Heart right ventricle (tissue), 16 donors: ENCODE measurements at regions of chr9 and their contacts with region 1.

Region 1: GRCh38 chr9:69253057-69253456 is 72.0 kb upstream of the ENTREP1 start:
- DNase-seq: no peak
- ATAC-seq: peak in 6 of 8 donors; percentile 15 to 45 (median 36)
- H3K4me3 ChIP-seq: no peak overlapping the region
- H3K27ac ChIP-seq: peak overlapping the region in 8 of 10 donors; percentile 12 to 77 (median 58)
- H3K4me1 ChIP-seq: peaks cover 0 to 35% (median 23%) of the 10 kb centered on the region in 9 donors
- H3K27me3 ChIP-seq: no peaks in the 10 kb centered on the region
- CTCF ChIP-seq: no peak

Region 2: GRCh38 chr9:69035438-69036308 is 217.4 kb before region 1 on chr9 and contains the start of gene FXN:
- intact Hi-C with region 1: loop called in 1 of 10 experiments (anchors 5 kb)
- DNase-seq: peak; percentile 83 to 87
- ATAC-seq: peak; percentile 91 to 97 (median 95)
- H3K4me3 ChIP-seq: peak within 1 kb of the TSS; percentile 54 to 81 (median 72)
- H3K27ac ChIP-seq: peak within 1 kb of the TSS; percentile 34 to 89 (median 86)
- H3K4me1 ChIP-seq: peaks cover 0 to 22% (median 11%) of the 10 kb centered on the region in 9 donors
- H3K27me3 ChIP-seq: no peaks in the 10 kb centered on the region
- CTCF ChIP-seq: peak; percentile 98 to 100 (median 99)
- total RNA-seq, gene FXN: 18.8 to 41.8 (median 36.8) TPM

Region 3: GRCh38 chr9:69376651-69377050 is 123.6 kb after region 1 on chr9:
- intact Hi-C with region 1: loop called in 2 of 10 experiments (anchors 10 kb)
- DNase-seq: no peak
- ATAC-seq: peak; percentile 70 to 90 (median 83)
- H3K4me3 ChIP-seq: no peak overlapping the region
- H3K27ac ChIP-seq: peak overlapping the region in 9 of 10 donors; percentile 43 to 87 (median 57)
- H3K4me1 ChIP-seq: peaks cover 11 to 71% (median 46%) of the 10 kb centered on the region in 9 donors
- H3K27me3 ChIP-seq: no peaks in the 10 kb centered on the region
- CTCF ChIP-seq: no peak

Region 4: DNA sequence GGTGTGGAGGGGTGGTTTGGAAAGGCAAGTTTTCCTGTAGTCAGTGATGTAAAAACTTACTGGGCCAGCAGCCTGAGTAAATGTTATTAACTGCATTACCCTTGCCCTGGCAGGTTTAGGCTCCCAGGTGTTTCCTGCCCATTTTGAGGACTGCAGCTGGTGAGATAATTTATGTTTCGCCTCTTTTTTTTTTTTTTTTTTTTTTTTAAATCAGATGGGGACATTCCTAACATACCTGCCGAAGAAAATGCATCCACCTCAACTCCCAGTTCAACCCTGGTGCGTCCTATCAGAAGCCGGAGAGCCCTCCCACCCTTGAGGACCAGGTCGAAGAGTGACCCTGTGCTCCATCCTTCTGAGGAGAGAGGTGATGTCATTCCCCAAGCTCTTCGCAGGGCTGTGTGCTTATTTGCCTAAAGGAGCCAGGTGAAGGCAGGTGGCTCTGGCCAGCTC is 132.6 kb after region 1 on chr9:
- intact Hi-C with region 1: loop called in 1 of 10 experiments (anchors 10 kb)
- DNase-seq: no peak
- ATAC-seq: peak in 1 of 8 donors; percentile 27
- H3K4me3 ChIP-seq: no peak overlapping the region
- H3K27ac ChIP-seq: no peak overlapping the region
- H3K4me1 ChIP-seq: peaks cover 4 to 50% (median 12%) of the 10 kb centered on the region in 9 donors
- H3K27me3 ChIP-seq: no peaks in the 10 kb centered on the region
- CTCF ChIP-seq: no peak

Region 5: DNA sequence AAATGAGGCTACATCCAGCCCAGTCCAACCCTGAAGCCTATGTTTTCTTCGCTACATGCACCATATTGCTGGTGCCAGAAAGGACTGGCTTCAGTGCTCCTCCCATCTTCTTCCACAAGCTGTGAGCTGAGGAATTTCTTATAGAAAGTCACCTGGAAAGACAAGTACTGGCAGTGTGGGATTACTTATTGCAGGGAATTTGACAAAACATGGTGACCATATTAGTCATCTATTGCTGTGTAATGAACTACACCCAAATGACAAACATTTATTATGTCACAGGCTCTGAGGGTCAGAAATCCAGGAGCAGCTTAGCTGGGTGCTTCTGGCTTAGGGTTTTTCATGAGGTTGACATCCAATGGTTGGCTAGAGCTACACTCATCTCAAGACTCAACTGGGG is 147.4 kb after region 1 on chr9:
- intact Hi-C with region 1: no loop called
- DNase-seq: no peak
- ATAC-seq: no peak
- H3K4me3 ChIP-seq: no peak overlapping the region
- H3K27ac ChIP-seq: no peak overlapping the region
- H3K4me1 ChIP-seq: peaks cover 0 to 14% (median 0%) of the 10 kb centered on the region in 9 donors
- H3K27me3 ChIP-seq: no peaks in the 10 kb centered on the region
- CTCF ChIP-seq: no peak